ENCODE measurements at regions of chr9 and their contacts with region 1.

Region 1: DNA sequence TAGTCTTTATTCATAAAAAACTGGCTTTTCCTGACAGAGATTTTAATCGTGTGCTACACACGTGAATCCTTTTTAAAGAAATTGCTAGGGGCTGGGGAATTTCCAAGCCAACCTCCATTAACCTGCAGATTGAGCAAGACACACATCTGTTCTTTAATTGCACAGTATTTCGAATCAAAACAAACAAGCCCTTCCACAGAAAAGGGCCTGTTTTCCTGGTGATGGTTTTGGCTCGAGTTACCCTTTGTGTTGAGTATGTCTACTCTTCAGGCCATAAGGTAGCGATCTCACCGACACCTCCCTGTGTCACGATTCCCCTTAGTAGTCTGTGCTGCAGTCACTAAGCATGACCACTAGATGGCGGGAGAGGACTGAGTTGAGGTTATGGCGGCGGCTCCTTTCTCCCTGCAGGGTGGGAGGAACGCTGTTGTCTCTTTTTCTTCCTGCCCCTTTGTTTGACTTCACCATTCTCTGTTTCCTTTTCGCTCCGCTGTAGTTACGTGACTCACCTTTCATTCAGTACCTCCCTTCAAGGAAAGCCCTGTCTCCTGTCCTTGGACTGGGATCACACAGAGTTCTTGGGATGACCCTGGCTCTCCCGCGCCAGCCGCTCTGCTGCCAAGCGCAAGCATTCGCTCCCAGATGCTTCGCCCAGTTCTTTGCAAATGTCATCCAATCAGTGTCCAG is 137.1 kb upstream of the SLC24A2 start:
- DNase-seq: peak; percentile 55
- ATAC-seq: peak; percentile 98
- H3K4me3 ChIP-seq: no peak overlapping the region
- H3K27ac ChIP-seq: no peak overlapping the region
- H3K4me1 ChIP-seq: no peaks in the 10 kb centered on the region
- H3K27me3 ChIP-seq: peaks cover 1 to 15% of the 10 kb centered on the region in 2 experiments; a peak in 3 of 5 replicates
- CTCF ChIP-seq: peak; percentile 96
- EP300 ChIP-seq: no peak
- POLR2A ChIP-seq: no peak
- RAD21 ChIP-seq: peak; percentile 86

Region 2: DNA sequence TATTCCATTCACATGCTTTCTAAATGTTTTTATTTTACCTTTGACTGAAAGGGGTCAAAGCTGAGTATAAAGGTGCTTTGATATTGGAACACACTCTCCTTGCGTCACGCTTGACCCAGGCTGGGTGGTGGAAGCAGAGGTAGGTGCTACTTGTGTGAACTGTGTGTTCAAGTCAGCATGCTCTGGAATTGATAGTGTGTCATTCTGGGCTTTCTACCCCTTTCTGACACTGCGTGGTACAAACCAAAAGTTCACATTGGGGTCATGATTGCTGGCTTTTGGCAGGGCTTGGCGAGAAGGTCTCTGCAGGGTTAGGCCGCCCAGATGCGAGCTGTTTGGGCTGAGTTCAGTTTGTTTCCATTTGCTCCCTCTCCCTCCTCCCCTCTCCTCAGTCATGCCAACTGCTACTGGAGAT is 1320.2 kb before region 1 on chr9:
- CTCF ChIA-PET with region 1: no interaction called
- POLR2A ChIA-PET with region 1: no interaction called
- in situ Hi-C with region 1: no loop called
- intact Hi-C with region 1: no loop called
- DNase-seq: no peak
- ATAC-seq: no peak
- H3K4me3 ChIP-seq: no peak overlapping the region
- H3K27ac ChIP-seq: no peak overlapping the region
- H3K4me1 ChIP-seq: no peaks in the 10 kb centered on the region
- H3K27me3 ChIP-seq: peaks cover 0 to 3% of the 10 kb centered on the region in 2 experiments; a peak in 1 of 5 replicates
- CTCF ChIP-seq: no peak
- EP300 ChIP-seq: no peak
- POLR2A ChIP-seq: no peak
- RAD21 ChIP-seq: no peak

Region 3: GRCh38 chr9:19812194-19812593 is 113.8 kb before region 1 on chr9:
- CTCF ChIA-PET with region 1: no interaction called
- POLR2A ChIA-PET with region 1: no interaction called
- in situ Hi-C with region 1: no loop called
- intact Hi-C with region 1: no loop called
- DNase-seq: no peak
- ATAC-seq: no peak
- H3K4me3 ChIP-seq: no peak overlapping the region
- H3K27ac ChIP-seq: no peak overlapping the region
- H3K4me1 ChIP-seq: no peaks in the 10 kb centered on the region
- H3K27me3 ChIP-seq: no peaks in the 10 kb centered on the region
- CTCF ChIP-seq: no peak
- EP300 ChIP-seq: no peak
- POLR2A ChIP-seq: no peak
- RAD21 ChIP-seq: no peak

Region 4: GRCh38 chr9:20191228-20191840 is 265.4 kb after region 1 on chr9:
- CTCF ChIA-PET with region 1: no interaction called
- POLR2A ChIA-PET with region 1: no interaction called
- in situ Hi-C with region 1: no loop called
- intact Hi-C with region 1: loop called (anchors 5 kb)
- DNase-seq: no peak
- ATAC-seq: no peak
- H3K4me3 ChIP-seq: no peak overlapping the region
- H3K27ac ChIP-seq: no peak overlapping the region
- H3K4me1 ChIP-seq: no peaks in the 10 kb centered on the region
- H3K27me3 ChIP-seq: no peaks in the 10 kb centered on the region
- CTCF ChIP-seq: no peak
- EP300 ChIP-seq: no peak
- POLR2A ChIP-seq: no peak
- RAD21 ChIP-seq: no peak

Region 5: GRCh38 chr9:20407012-20407411 is 481.1 kb after region 1 on chr9:
- CTCF ChIA-PET with region 1: no interaction called
- POLR2A ChIA-PET with region 1: no interaction called
- in situ Hi-C with region 1: no loop called
- intact Hi-C with region 1: loop called (anchors 1 kb)
- DNase-seq: no peak
- ATAC-seq: no peak
- H3K4me3 ChIP-seq: no peak overlapping the region
- H3K27ac ChIP-seq: no peak overlapping the region
- H3K4me1 ChIP-seq: peaks cover 15% of the 10 kb centered on the region
- H3K27me3 ChIP-seq: no peaks in the 10 kb centered on the region
- CTCF ChIP-seq: peak; percentile 25; the same call in 1 of the 2 replicates
- EP300 ChIP-seq: no peak
- POLR2A ChIP-seq: no peak
- RAD21 ChIP-seq: no peak

Region 6: GRCh38 chr9:20941174-20941690 is 1015.3 kb after region 1 on chr9:
- CTCF ChIA-PET with region 1: interaction called, 3 read pairs
- POLR2A ChIA-PET with region 1: no interaction called
- in situ Hi-C with region 1: loop called (anchors 10 kb)
- intact Hi-C with region 1: loop called (anchors 1 kb)
- DNase-seq: peak; percentile 63
- ATAC-seq: peak; percentile 100
- H3K4me3 ChIP-seq: no peak overlapping the region
- H3K27ac ChIP-seq: no peak overlapping the region
- H3K4me1 ChIP-seq: no peaks in the 10 kb centered on the region
- H3K27me3 ChIP-seq: no peaks in the 10 kb centered on the region
- CTCF ChIP-seq: peak; percentile 94
- EP300 ChIP-seq: no peak
- POLR2A ChIP-seq: no peak
- RAD21 ChIP-seq: peak; percentile 83

Measured in HepG2 (cell line).